Aorta (tissue), 5 donors: ENCODE measurements at regions of chr1 and their contacts with region 1.

Region 1: DNA sequence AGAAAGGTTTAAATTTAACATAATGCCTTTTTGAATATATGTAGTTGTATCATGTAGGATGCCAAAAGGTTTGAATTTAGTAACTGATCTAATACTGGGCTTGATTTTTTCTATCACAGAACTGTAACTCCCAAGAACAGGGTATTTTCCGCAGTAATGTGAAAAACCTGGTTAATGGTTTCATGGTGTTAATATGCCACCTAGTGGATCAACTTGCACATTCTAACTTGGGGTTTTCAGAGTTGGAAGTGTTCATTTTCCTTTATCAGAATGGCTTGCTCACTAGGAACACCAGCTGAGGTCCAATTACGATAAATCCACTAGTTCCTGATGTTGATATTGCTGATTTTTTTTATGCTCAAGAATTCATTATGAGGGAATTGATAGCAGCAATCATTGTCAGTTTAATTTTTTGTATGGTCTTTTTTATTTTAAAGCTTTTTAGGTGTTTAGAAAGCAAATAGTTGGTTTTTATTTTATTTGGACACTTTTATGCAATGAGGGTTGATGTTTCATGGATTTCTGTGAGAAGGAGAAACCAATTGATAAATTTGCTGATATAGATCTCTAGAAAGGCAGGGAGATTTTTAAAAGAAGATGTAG is 157.2 kb downstream of the PLA2G4A start:
- DNase-seq: no peak
- ATAC-seq: peak; percentile 85
- H3K4me3 ChIP-seq: no peak overlapping the region
- H3K27ac ChIP-seq: no peak overlapping the region
- H3K4me1 ChIP-seq: no peaks in the 10 kb centered on the region
- H3K27me3 ChIP-seq: no peaks in the 10 kb centered on the region

Region 2: GRCh38 chr1:186404454-186405051 is 581.4 kb before region 1 on chr1:
- intact Hi-C with region 1: loop called (anchors 10 kb)
- DNase-seq: no peak
- ATAC-seq: peak; percentile 79
- H3K4me3 ChIP-seq: no peak overlapping the region
- H3K27ac ChIP-seq: no peak overlapping the region
- H3K4me1 ChIP-seq: no peaks in the 10 kb centered on the region
- H3K27me3 ChIP-seq: no peaks in the 10 kb centered on the region

Region 3: GRCh38 chr1:186482661-186483255 is 503.2 kb before region 1 on chr1:
- intact Hi-C with region 1: loop called (anchors 5 kb)
- DNase-seq: peak; percentile 63 to 73
- ATAC-seq: peak; percentile 72
- H3K4me3 ChIP-seq: no peak overlapping the region
- H3K27ac ChIP-seq: no peak overlapping the region
- H3K4me1 ChIP-seq: no peaks in the 10 kb centered on the region
- H3K27me3 ChIP-seq: no peaks in the 10 kb centered on the region

Region 4: DNA sequence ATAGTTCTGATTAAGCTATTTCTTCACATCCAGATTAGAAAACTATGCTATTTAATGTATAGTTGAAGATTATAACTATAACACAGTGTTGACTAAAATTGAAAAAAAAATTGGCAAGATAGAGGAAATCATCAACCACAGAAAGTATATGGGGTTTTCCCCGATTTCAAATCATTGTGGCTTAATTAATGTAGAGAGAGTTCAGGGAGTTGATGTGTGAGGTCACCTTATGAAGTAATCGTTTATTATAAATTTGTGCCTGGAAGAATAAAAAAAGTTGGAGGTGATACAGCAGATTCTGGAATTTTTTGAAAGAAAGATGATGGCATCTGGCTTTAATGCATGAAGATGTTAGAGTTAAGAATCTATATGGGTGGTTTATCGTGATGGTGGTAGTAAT is 390.0 kb before region 1 on chr1:
- intact Hi-C with region 1: loop called (anchors 5 to 10 kb)
- DNase-seq: no peak
- ATAC-seq: no peak
- H3K4me3 ChIP-seq: no peak overlapping the region
- H3K27ac ChIP-seq: no peak overlapping the region
- H3K4me1 ChIP-seq: no peaks in the 10 kb centered on the region
- H3K27me3 ChIP-seq: no peaks in the 10 kb centered on the region

Region 5: DNA sequence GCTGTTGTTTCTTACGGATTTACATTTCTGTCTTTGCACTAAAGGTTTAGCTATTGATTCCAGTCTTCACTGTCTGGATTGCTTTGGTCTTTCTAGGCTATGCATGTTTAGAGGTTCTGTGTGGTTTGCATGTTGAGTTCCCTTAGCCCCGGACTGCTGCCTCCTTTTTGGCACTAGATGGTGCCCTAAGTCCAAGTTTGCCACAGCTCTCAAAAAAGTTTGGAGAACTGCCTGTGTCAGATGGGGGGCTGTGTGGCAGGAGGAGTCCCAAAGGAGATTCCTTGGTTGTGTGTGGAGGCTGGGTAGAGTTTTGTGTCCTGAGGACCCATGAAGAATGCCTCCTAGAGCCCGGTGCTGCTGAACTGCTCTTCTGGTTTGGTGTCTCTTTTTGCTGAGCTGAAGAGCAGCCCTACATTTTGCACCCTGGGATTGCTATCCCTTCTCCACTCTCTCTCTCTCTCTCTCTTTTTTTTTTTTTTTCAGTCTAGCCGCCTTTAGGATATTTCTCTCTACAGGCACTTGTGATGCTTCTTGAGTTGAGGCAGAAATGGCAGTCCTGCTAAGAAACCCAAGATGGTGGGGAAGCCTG is 380.1 kb before region 1 on chr1:
- intact Hi-C with region 1: loop called in 1 of 2 experiments (anchors 10 kb)
- DNase-seq: no peak
- ATAC-seq: peak; percentile 79
- H3K4me3 ChIP-seq: no peak overlapping the region
- H3K27ac ChIP-seq: no peak overlapping the region
- H3K4me1 ChIP-seq: no peaks in the 10 kb centered on the region
- H3K27me3 ChIP-seq: no peaks in the 10 kb centered on the region